ENCODE measurements at regions of chr10 and their contacts with region 1.

Region 1: GRCh38 chr10:15168781-15169554 is 475 bp upstream of the NMT2 start:
- DNase-seq: peak; percentile 99
- H3K4me3 Mint-ChIP-seq: peak overlapping the region; percentile 74
- H3K27ac Mint-ChIP-seq: peak overlapping the region; percentile 76
- H3K4me1 Mint-ChIP-seq: peaks cover 49% of the 10 kb centered on the region
- H3K27me3 Mint-ChIP-seq: no peaks in the 10 kb centered on the region

Region 2: GRCh38 chr10:14024329-14025202 is 1144.4 kb before region 1 on chr10:
- CTCF ChIA-PET with region 1: no interaction called
- intact Hi-C with region 1: no loop called
- DNase-seq: no peak
- H3K4me3 Mint-ChIP-seq: no peak overlapping the region
- H3K27ac Mint-ChIP-seq: no peak overlapping the region
- H3K4me1 Mint-ChIP-seq: peaks cover 18% of the 10 kb centered on the region
- H3K27me3 Mint-ChIP-seq: no peaks in the 10 kb centered on the region

Region 3: DNA sequence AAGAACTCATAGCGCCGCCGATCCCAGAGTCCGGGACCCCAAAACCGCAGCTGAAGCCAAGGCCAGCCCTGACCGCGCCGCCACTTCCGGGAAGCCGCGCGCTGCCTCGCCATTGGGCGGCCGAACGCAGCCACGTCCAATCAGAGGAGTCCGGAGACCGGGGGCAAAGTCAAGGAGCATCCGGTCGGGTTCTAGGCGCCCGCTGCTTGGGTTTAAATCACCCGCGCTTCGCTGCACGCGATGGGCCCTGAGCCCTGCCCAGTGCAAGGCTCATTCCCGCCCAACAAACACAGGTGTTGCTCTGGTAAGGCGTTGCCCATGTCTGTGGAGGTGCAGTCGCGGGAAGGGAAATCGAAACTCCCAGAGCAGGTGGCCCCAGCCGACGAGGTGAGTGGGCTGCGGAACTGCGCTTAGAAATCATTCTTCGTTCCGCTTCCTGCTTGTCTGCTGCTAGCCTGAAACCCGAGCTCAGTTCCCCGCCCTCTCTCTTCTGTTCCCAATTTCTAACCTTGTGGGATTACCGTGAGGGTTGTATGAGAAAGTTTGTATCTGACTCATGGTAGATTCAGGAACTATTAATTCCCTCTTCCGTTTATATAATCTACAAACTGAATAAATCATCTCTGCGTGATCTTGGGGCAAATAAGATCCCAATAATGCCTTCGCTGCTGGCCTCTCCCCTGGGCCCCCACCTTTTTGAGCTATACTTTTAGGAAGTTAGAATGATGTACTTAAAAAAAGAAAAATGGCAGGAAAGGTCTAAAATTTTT is 214.8 kb before region 1 on chr10 and contains the start of gene DCLRE1C:
- CTCF ChIA-PET with region 1: no interaction called
- intact Hi-C with region 1: loop called (anchors 1 kb)
- DNase-seq: peak; percentile 91
- H3K4me3 Mint-ChIP-seq: peak within 1 kb of the TSS; percentile 90
- H3K27ac Mint-ChIP-seq: peak within 1 kb of the TSS; percentile 93
- H3K4me1 Mint-ChIP-seq: peaks cover 54% of the 10 kb centered on the region
- H3K27me3 Mint-ChIP-seq: no peaks in the 10 kb centered on the region
- total RNA-seq, gene DCLRE1C: 9.8 to 13.9 TPM

Region 4: GRCh38 chr10:15088428-15089261 is 80.3 kb before region 1 on chr10 and contains the start of gene ACBD7:
- CTCF ChIA-PET with region 1: no interaction called
- intact Hi-C with region 1: loop called (anchors 2 kb)
- DNase-seq: peak; percentile 80
- H3K4me3 Mint-ChIP-seq: peak within 1 kb of the TSS; percentile 68
- H3K27ac Mint-ChIP-seq: no peak within 1 kb of the TSS
- H3K4me1 Mint-ChIP-seq: peaks cover 2% of the 10 kb centered on the region
- H3K27me3 Mint-ChIP-seq: no peaks in the 10 kb centered on the region
- total RNA-seq, gene ACBD7: 0.72 to 0.94 TPM

Region 5: DNA sequence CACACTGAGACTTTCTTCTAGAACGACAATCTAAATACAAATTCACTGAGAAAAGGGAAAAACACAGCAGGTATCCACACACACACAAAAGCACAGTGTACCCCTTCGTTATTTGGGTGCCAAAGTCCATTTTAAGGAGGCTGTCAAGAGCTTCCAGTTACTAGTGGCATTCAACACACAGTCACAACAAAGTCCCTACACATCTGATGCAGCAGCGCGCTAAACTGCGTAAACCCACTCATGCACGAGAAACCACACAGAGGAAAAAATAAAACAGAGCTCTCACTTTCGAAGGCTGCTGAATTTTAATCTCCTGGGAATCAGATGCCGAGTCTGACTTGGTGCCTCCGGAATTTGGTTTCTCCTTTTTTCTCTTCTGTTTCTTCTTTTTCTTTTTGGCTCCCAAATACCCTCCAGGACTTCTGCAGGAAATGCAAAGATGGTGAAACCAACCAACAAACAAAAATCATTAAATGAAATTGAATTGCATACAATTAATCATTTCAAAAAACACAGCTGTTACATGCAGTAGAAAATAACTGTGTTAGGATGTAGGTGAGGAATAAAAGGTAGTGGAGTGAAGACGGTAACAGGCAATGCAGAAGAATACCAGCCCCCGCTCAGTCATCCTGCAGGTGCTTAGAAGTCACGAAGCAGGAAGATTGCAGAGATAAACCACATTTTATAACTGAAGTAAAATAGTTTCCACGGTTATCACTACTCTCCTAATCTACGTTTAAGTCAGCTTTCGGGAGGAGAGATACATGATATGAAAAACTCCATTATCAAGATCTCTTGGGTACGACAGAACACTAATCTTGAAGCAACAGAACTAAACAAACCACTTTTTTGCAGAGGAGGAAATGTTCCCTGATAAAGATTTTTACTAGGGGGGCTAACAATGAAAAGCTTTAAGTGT is 27.6 kb before region 1 on chr10:
- CTCF ChIA-PET with region 1: interaction called, 14 read pairs
- intact Hi-C with region 1: loop called (anchors 1 kb)
- DNase-seq: peak; percentile 59
- H3K4me3 Mint-ChIP-seq: peak overlapping the region; percentile 67
- H3K27ac Mint-ChIP-seq: peak overlapping the region; percentile 25
- H3K4me1 Mint-ChIP-seq: peaks cover 38% of the 10 kb centered on the region
- H3K27me3 Mint-ChIP-seq: no peaks in the 10 kb centered on the region

Region 6: GRCh38 chr10:15254808-15255648 is 86.1 kb after region 1 on chr10:
- CTCF ChIA-PET with region 1: no interaction called
- intact Hi-C with region 1: loop called (anchors 5 kb)
- DNase-seq: peak; percentile 59
- H3K4me3 Mint-ChIP-seq: peak overlapping the region; percentile 79
- H3K27ac Mint-ChIP-seq: peak overlapping the region; percentile 80
- H3K4me1 Mint-ChIP-seq: peaks cover 39% of the 10 kb centered on the region
- H3K27me3 Mint-ChIP-seq: no peaks in the 10 kb centered on the region

Region 7: GRCh38 chr10:15540727-15541126 is 371.8 kb after region 1 on chr10:
- CTCF ChIA-PET with region 1: no interaction called
- intact Hi-C with region 1: no loop called
- DNase-seq: no peak
- H3K4me3 Mint-ChIP-seq: no peak overlapping the region
- H3K27ac Mint-ChIP-seq: no peak overlapping the region
- H3K4me1 Mint-ChIP-seq: no peaks in the 10 kb centered on the region
- H3K27me3 Mint-ChIP-seq: no peaks in the 10 kb centered on the region